Mammary epithelial cell (primary cell): ENCODE measurements at regions of chr6 and their contacts with region 1.

Region 1: DNA sequence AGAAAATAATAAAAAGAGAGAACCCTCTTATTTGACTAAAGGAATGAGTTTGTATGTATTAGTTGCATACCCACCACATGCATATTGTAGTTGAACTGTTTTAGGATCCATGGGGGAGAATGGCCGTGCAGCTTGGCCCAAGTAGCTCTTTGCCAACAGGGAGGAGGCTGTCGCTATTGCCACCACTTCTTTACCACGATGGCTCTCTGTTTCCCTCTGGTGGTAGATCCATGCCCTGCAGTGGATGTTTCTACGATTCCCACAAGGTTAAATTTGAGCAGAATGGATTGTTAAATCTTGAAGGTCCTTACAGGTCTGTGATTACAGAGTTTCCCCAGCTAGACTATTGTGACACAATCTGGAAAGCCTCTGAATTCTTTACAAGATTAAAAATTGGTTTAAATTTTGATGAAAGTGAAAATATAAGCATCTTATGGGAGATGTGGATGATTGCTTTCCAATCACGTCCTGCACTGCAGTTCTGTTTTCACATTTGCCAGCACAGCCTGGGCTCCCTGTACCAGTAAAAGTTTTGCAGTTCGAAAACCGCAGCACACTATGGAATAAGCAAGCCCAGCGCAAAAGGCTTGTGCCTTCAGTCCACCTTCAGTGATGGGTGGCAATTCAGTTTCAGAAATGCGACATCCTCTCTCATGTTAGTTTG is 34.4 kb upstream of the FNDC1 start:
- DNase-seq: peak; percentile 36
- H3K4me3 ChIP-seq: no peak overlapping the region
- H3K27ac ChIP-seq: no peak overlapping the region
- H3K4me1 ChIP-seq: no peaks in the 10 kb centered on the region
- H3K27me3 ChIP-seq: no peaks in the 10 kb centered on the region
- CTCF ChIP-seq: peak; percentile 98 to 99

Region 2: DNA sequence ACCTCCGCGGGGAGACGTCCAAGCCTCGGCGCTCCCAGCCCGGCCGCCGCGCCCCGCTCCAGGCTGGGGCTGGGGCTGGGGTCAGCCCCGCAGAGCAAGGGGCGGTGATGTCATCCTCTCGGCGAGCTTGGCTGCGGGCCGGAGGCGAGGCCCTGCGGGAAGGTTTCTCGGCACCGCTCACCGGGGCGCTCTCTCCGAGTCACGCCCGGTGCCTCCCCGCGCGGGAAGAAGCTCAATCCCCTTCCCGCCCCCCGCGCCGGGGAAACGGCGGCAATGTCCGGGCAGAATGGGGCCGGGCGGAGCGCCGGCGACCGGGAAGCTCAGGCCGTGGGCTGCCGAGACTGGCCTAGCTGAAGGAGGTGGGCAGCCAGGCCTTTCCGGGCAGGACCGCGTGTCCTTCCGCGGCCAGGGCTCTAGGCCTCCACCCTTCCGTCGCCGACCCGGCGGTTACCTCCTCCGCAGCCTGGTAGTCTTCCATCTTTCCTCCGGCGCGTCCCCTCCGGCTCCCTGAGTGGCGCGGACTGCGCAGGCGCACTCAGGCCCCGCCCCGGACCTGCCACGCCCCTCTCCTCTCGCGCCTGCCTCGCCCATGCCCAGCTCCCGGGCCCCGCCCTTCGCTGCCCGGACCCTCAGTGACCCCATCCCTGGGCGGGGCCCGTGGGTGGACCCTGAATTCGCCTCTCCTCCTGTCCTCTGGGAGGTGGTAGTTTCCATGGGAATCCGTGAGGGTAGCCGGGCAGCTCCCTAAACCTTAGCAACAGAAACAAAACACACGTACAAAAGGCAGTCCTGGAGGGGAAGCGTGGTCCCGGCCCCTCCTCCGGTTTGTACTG is 490.4 kb before region 1 on chr6 and contains the start of gene DYNLT1:
- CTCF ChIA-PET with region 1: interaction called, 12 read pairs
- dilution Hi-C with region 1: no loop called
- in situ Hi-C with region 1: no loop called
- intact Hi-C with region 1: no loop called
- DNase-seq: peak; percentile 97
- H3K4me3 ChIP-seq: peak within 1 kb of the TSS; percentile 59 to 98 (median 77)
- H3K27ac ChIP-seq: peak within 1 kb of the TSS; percentile 97
- H3K4me1 ChIP-seq: peaks cover 47% of the 10 kb centered on the region
- H3K27me3 ChIP-seq: no peaks in the 10 kb centered on the region
- CTCF ChIP-seq: no peak
- total RNA-seq, gene DYNLT1: 51.8 to 129 TPM

Region 3: GRCh38 chr6:158718461-158719046 is 416.3 kb before region 1 on chr6:
- CTCF ChIA-PET with region 1: no interaction called
- dilution Hi-C with region 1: no loop called
- in situ Hi-C with region 1: no loop called
- intact Hi-C with region 1: no loop called
- DNase-seq: no peak
- H3K4me3 ChIP-seq: no peak overlapping the region
- H3K27ac ChIP-seq: no peak overlapping the region
- H3K4me1 ChIP-seq: peaks cover 15% of the 10 kb centered on the region
- H3K27me3 ChIP-seq: no peaks in the 10 kb centered on the region
- CTCF ChIP-seq: peak; percentile 34 to 55

Region 4: DNA sequence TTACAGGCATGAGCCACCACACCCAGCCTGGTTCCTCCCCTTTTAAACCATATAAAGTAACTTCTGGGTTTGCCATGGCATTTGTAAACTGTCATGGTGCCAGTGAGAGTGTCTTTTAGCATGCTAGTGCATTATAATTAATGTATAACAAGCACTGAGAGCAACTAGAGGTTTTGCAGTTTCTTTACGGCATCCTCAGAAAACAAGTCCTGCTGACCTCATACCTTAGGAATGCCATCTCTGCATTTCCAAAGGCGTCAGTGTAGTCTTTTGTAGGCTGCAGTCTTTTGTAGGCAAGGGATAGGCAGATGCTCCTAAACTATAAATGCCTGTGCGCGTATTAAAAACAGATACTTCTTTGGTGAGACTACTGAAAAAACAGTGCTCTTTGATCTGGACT is 240.6 kb before region 1 on chr6:
- CTCF ChIA-PET with region 1: no interaction called
- dilution Hi-C with region 1: no loop called
- in situ Hi-C with region 1: no loop called
- intact Hi-C with region 1: no loop called
- DNase-seq: peak; percentile 89
- H3K4me3 ChIP-seq: no peak overlapping the region
- H3K27ac ChIP-seq: peak overlapping the region; percentile 77
- H3K4me1 ChIP-seq: peaks cover 20% of the 10 kb centered on the region
- H3K27me3 ChIP-seq: no peaks in the 10 kb centered on the region
- CTCF ChIP-seq: no peak

Region 5: DNA sequence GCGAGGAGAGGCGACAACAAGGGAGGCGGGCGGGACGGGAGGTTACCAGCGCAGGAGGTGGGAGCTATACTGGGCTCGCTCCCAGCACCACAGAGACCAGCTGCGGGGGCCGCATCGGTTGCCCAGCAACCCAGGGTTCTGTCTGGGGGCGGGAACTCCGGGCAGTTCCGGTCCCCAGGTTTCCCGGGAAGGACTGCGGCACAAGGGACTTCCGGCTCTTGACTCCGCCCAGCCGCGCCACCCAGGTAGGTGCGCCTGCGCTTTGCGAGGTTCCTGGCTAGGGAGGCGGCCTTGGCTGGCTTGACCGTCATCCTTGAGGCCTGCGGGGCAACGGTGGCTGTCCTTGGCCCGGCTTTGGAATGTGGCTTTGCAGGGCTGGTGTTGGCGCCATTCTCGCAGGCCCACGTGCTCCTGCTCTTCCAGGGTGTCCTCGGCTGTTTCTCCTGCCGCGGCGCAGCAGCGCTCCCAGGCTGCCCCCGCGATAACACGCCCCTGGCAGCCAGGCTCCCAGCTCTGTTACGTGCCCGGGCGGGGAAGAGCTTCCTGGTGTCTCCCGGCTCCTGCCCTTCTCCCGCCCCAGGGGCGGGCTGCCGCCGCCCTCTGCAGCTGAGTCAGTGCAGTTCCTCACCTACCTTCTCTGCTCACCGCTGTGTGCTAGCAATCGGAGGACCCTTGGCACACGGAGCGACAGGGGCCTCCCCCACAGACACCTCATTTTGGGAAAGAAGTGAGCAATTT is 135.0 kb before region 1 on chr6 and contains the start of gene RSPH3:
- CTCF ChIA-PET with region 1: no interaction called
- dilution Hi-C with region 1: no loop called
- in situ Hi-C with region 1: loop called in 1 of 2 experiments (anchors 5 kb)
- intact Hi-C with region 1: no loop called
- DNase-seq: peak; percentile 97
- H3K4me3 ChIP-seq: peak within 1 kb of the TSS; percentile 42 to 94 (median 65)
- H3K27ac ChIP-seq: peak within 1 kb of the TSS; percentile 69
- H3K4me1 ChIP-seq: peaks cover 19% of the 10 kb centered on the region
- H3K27me3 ChIP-seq: no peaks in the 10 kb centered on the region
- CTCF ChIP-seq: peak in 1 of 2 donors; percentile 37
- total RNA-seq, gene RSPH3: 12.2 to 15.6 TPM

Region 6: DNA sequence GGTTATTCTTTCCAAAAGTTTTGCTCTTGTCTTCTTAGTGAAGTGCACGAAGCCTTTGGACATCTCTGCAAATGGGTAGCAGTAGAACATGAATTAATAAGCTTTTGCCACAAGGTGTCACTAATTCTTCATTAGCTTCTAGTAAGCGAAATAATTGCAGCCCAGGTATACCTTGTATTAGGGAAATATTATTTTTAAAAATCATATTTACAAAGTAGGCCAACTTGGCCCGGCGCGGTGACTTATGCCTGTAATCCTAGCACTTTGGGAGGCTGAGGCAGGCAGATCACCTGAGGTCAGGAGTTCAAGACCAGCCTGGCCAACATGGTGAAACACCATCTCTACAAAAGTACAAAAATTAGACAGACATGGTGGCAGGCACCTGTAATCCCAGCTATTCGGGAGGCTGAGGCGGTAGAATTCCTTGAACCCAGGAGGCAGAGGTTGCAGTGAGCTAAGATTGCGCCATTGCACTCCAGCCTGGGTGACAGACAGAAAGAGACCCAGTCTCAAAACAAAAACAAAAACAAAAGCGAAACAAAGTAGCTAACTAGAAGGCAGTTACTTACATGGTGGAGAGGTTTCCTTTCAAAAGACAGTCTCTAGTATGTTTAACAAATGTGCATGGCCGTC is 126.1 kb before region 1 on chr6:
- CTCF ChIA-PET with region 1: interaction called, 13 read pairs
- dilution Hi-C with region 1: no loop called
- in situ Hi-C with region 1: loop called in 1 of 2 experiments (anchors 5 kb)
- intact Hi-C with region 1: loop called (anchors 1 kb)
- DNase-seq: peak; percentile 45
- H3K4me3 ChIP-seq: no peak overlapping the region
- H3K27ac ChIP-seq: no peak overlapping the region
- H3K4me1 ChIP-seq: no peaks in the 10 kb centered on the region
- H3K27me3 ChIP-seq: no peaks in the 10 kb centered on the region
- CTCF ChIP-seq: peak; percentile 50 to 55

Region 7: DNA sequence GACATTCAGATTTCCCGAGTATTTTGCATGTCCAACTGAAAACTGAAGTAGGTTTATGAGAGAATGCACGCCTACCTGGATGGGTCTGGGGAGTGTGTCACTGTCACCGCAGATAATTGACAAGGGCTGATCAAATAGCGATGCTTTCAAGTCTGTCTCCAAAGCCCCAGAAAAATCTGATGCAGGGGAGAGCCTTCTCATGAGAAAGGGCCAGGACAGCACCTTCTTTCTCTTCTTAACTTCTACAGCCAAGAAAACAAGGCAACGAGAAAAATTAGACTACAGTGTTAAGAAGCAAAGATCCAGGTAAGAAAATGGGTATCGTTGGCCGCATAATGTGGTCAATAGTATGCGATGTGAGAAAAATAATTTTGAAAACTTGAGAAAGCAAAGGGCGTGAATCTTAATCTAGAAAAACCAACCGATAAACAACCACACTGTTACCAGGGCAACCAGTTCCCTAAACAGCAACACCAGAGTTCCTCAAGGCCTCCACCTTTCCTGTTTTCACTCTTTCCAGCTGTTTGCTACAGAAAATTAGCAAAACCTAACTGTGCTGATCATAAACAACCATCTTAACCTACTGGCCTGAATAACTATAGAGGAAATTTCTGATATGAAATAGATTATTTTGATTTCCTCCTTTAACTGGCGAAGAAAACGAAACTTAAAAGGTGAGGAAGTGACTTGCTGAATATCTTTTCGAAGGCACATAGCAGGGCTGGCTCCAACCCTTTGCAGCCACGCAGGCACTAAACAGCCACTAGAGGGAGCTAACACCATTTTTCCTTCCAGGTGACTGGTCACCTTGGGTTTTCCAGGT is 92.6 kb before region 1 on chr6:
- CTCF ChIA-PET with region 1: interaction called, 3 read pairs
- dilution Hi-C with region 1: no loop called
- in situ Hi-C with region 1: no loop called
- intact Hi-C with region 1: loop called (anchors 1 kb)
- DNase-seq: peak; percentile 84
- H3K4me3 ChIP-seq: no peak overlapping the region
- H3K27ac ChIP-seq: peak overlapping the region; percentile 74
- H3K4me1 ChIP-seq: peaks cover 27% of the 10 kb centered on the region
- H3K27me3 ChIP-seq: no peaks in the 10 kb centered on the region
- CTCF ChIP-seq: peak; percentile 94 to 99